Heart left ventricle (tissue), 16 donors: ENCODE measurements at regions of chr5 and their contacts with region 1.

Region 1: DNA sequence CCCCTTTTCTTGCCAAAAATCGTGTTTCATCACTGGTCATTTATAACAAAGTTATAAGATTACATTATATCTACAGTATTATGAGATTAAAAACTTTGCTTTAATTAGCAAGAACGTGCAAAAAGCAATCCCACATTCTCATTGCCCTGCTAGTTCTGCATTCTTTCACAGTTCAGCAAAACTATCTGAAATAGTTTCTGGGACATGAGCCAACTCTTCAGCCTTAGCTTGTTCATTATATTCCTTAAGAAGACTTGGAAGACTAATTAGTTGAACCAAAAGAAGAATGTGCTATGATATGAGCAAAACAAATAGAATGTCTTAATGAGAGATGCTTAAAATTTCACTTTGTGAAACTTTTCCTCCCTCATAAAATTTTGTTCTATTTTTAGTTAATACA is 76.7 kb downstream of the ITGA1 start:
- DNase-seq: no peak
- ATAC-seq: peak in 1 of 4 donors; percentile 58
- H3K4me3 ChIP-seq: no peak overlapping the region
- H3K27ac ChIP-seq: peak overlapping the region in 9 of 12 donors; percentile 9 to 70 (median 47)
- H3K4me1 ChIP-seq: peaks cover 0 to 32% (median 19%) of the 10 kb centered on the region in 12 donors
- H3K27me3 ChIP-seq: no peaks in the 10 kb centered on the region
- CTCF ChIP-seq: no peak
- POLR2A ChIP-seq: no peak

Region 2: DNA sequence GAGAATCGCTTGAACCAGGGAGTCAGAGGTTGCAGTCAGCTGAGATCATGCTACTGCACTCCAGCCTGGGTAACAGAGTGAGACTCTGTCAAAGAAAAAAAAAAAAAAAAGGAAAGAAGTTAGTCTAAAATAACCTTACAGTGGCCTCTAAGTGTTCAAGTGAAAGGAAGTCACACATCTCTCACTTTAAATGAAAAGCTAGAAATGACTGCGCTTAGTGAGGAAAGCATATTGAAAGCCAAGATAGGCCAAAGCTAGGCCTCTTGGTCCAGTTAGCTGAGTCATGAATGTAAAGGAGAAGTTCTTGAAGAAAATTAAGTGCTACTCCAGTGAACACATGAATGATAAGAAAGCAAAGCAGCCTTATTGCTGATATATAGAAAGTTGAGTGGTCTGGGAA is 38.5 kb before region 1 on chr5:
- intact Hi-C with region 1: loop called in 1 of 10 experiments (anchors 5 kb)
- DNase-seq: no peak
- ATAC-seq: no peak
- H3K4me3 ChIP-seq: no peak overlapping the region
- H3K27ac ChIP-seq: peak overlapping the region in 1 of 12 donors; percentile 5
- H3K4me1 ChIP-seq: peaks cover 3 to 28% (median 14%) of the 10 kb centered on the region in 12 donors
- H3K27me3 ChIP-seq: no peaks in the 10 kb centered on the region
- CTCF ChIP-seq: no peak
- POLR2A ChIP-seq: no peak